ENCODE measurements at regions of chr15 and their contacts with region 1.

Region 1: GRCh38 chr15:89760303-89761008 is 9.4 kb upstream of the MESP1 start:
- DNase-seq: peak in 1 of 2 experiments; percentile 85
- H3K4me3 ChIP-seq: no peak overlapping the region
- H3K27ac ChIP-seq: peak overlapping the region; percentile 98
- H3K4me1 ChIP-seq: peaks cover 61% of the 10 kb centered on the region
- H3K27me3 ChIP-seq: no peaks in the 10 kb centered on the region
- CTCF ChIP-seq: peak; percentile 93

Region 2: DNA sequence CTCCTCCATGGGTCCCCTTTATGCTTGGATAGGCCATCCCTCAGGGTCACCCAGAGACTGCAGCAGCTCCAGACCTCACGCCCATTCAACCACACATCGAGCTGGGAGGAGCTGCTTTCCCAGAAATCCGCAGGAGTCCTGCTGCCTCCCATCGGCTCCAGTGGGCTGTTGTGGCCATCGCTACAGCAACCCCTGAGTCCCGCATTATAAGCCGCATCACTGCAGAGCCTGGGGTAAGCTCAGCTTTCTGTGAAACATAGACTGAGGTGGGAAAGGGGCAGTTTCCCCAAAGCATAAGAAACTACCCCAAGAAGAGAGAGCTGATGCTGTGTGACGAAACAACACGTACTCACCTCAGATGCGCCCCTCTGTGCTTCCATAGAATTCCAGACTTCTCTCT is 1329.0 kb before region 1 on chr15:
- CTCF ChIA-PET with region 1: no interaction called
- POLR2A ChIA-PET with region 1: no interaction called
- intact Hi-C with region 1: no loop called
- DNase-seq: no peak
- H3K4me3 ChIP-seq: no peak overlapping the region
- H3K27ac ChIP-seq: no peak overlapping the region
- H3K4me1 ChIP-seq: no peaks in the 10 kb centered on the region
- H3K27me3 ChIP-seq: peaks cover 86% of the 10 kb centered on the region
- CTCF ChIP-seq: no peak

Region 3: GRCh38 chr15:89781891-89782618 is 21.6 kb after region 1 on chr15:
- CTCF ChIA-PET with region 1: interaction called, 8 read pairs
- POLR2A ChIA-PET with region 1: interaction called, 28 read pairs
- intact Hi-C with region 1: loop called (anchors 1 kb)
- DNase-seq: peak; percentile 91 to 96
- H3K4me3 ChIP-seq: no peak overlapping the region
- H3K27ac ChIP-seq: peak overlapping the region; percentile 96
- H3K4me1 ChIP-seq: peaks cover 76% of the 10 kb centered on the region
- H3K27me3 ChIP-seq: no peaks in the 10 kb centered on the region
- CTCF ChIP-seq: no peak

Region 4: DNA sequence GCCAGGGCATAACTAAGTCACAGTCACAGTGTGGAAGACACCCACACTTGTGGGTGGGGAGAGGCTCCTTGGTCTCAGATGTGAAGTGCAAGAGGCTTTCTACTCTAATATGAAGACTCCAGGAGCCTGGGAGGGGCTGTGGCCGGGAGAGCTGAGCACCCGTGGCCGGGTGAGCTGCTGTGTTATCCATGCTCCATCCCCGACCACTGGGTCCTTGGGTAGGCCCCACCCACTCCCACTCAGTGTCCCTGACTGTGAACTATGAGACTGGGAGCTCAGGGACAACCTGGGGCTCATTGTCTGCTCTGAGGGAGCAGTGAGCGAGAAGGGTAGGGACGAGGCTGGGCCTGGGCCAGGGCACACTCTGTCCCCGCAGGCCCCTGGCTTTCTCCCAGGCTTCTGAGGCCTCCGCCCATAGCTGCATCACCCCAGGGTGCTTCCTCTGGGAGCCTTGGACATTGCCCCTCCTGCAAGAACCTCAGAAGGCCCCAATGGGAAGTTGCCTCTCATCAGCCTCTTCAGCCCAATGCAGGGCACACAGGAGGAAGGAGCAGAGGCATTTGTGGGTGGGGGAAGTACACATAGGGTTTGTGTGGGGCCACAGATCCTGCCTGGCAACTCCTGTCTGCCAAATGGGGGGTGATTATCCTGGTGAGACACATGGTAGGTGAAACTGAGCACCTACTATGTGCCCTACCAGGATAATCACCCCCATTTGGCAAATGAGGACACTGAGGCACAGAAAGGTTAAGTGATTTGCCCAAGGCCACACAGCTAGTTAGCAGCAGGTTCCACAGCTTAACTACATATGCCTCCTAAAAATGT is 51.8 kb after region 1 on chr15:
- CTCF ChIA-PET with region 1: interaction called, 3 read pairs
- POLR2A ChIA-PET with region 1: no interaction called
- intact Hi-C with region 1: loop called (anchors 2 kb)
- DNase-seq: peak; percentile 61 to 74
- H3K4me3 ChIP-seq: peak overlapping the region; percentile 76; the same call in 1 of the 2 replicates
- H3K27ac ChIP-seq: peak overlapping the region; percentile 51
- H3K4me1 ChIP-seq: peaks cover 52% of the 10 kb centered on the region
- H3K27me3 ChIP-seq: no peaks in the 10 kb centered on the region
- CTCF ChIP-seq: no peak

Region 5: DNA sequence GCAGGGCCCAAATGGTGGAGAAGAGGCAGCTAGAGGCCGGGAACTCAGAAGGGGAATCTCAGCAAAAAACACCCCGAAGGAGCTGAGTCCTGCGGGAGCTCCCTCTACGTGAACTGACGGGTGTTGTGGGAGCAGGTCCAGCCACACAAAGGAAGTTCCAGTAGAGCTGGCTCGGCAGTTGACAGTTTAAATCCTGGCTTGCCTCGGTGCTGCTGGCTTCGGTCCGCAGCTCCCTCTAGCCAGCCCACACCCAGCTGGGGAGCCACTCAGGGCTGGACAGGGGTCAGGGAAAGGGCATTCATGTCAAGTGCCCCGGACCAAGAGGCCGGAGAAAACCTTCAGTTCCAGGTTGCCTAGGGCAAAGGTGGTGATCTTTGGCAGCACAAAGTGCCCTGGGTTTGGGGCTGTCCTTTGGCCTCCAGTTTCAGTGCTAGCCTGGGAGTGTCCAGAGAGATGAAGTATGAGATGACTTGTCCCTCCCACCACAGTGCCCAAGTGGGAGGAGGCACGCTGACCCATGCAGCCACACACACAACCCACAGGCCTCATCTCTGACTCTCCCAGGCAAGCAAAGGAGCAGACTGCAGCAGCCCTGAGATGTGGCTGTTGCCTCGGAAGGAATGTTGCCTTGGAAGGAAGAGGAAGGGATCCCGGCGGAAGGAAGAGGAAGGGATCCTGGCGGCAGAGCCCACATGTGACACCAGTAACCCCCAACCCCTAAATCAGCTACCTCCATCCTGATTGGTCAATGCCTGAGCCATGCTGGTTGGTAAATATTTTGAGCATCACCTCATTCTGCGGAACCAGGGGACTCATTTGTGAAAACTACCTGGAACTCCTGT is 68.0 kb after region 1 on chr15:
- CTCF ChIA-PET with region 1: no interaction called
- POLR2A ChIA-PET with region 1: no interaction called
- intact Hi-C with region 1: loop called (anchors 1 kb)
- DNase-seq: peak; percentile 75 to 78
- H3K4me3 ChIP-seq: 0 out of 2 replicates have a peak overlapping the region, but pooled peaks have one; percentile 6
- H3K27ac ChIP-seq: peak overlapping the region; percentile 79
- H3K4me1 ChIP-seq: peaks cover 67% of the 10 kb centered on the region
- H3K27me3 ChIP-seq: no peaks in the 10 kb centered on the region
- CTCF ChIP-seq: no peak

Region 6: DNA sequence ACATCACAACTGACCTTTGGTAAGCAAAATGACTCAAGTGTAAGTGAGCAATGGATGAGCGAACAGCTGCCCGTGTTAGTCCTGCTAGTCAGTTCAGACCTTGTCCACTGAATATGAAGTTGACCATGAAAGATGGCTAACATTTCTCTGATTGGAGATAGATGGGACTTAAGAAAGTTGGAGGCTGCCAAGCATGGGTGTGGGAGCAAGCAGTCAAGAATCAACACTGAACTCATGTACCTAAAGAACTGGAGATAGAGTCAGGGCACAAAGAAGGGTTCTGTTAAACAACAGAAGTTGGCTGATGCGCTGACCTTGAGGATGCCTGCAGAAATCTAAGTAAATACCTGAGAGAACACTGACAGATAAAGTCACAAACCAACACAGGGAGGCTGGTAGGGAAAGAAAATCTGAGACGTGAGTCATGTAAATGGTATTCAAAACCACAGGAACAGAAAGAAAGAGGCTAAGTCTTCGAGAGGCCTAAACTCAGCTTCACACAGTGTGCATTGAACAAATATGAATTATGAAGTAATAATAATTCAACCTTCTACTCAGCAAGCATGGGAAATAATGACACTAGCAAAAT is 84.9 kb after region 1 on chr15:
- CTCF ChIA-PET with region 1: no interaction called
- POLR2A ChIA-PET with region 1: no interaction called
- intact Hi-C with region 1: loop called (anchors 1 kb)
- DNase-seq: peak; percentile 49 to 87
- H3K4me3 ChIP-seq: no peak overlapping the region
- H3K27ac ChIP-seq: peak overlapping the region; percentile 94
- H3K4me1 ChIP-seq: peaks cover 56% of the 10 kb centered on the region
- H3K27me3 ChIP-seq: no peaks in the 10 kb centered on the region
- CTCF ChIP-seq: no peak

Region 7: DNA sequence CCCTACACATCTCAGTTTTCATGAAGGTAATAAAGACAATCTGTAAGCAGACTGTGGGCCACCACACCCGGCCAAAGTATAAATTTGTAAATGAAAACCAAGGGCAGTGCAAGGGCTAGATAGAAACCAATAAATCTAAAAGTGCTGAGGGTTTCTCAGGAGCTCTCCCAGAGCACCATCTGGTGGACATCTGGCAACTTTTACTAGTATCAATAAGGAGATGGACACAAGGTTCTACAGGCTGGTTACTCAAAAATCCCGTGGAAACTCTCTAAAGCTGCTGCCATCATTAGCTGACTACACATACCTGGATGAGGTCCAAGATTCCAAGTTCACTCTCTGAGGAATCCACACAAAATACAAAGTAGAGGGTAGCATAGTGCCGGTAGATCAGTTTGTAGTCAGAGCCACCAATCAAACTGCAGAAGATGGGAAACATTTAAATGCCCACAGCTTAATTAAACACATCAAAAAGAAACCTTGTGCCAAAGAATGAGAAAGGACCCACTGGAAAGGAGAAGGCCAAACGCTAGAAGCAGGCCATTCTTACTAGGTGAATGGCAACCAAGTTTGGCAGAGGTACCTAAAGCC is 127.9 kb after region 1 on chr15:
- CTCF ChIA-PET with region 1: no interaction called
- POLR2A ChIA-PET with region 1: interaction called, 6 read pairs
- intact Hi-C with region 1: loop called (anchors 1 kb)
- DNase-seq: peak; percentile 32 to 60
- H3K4me3 ChIP-seq: no peak overlapping the region
- H3K27ac ChIP-seq: no peak overlapping the region
- H3K4me1 ChIP-seq: peaks cover 14% of the 10 kb centered on the region
- H3K27me3 ChIP-seq: no peaks in the 10 kb centered on the region
- CTCF ChIP-seq: peak; percentile 67

Measured in PC-9 (cell line).